Dorsolateral prefrontal cortex (tissue), 120 donors: ENCODE measurements at regions of chr16 and their contacts with region 1.

Region 1: GRCh38 chr16:106623-107324 is 28.7 kb downstream of the MPG start:
- DNase-seq: peak in 7 of 10 donors; percentile 50 to 78 (median 65)
- H3K4me3 ChIP-seq: peak overlapping the region in 2 of 59 donors; percentile 5 to 17
- H3K27ac ChIP-seq: peak overlapping the region in 50 of 59 donors; percentile 13 to 88 (median 67)
- H3K27me3 ChIP-seq: no peaks in the 10 kb centered on the region
- CTCF ChIP-seq: peak; percentile 71 to 96 (median 84)

Region 2: GRCh38 chr16:143456-143855 is 36.7 kb after region 1 on chr16:
- intact Hi-C with region 1: loop called in 1 of 2 experiments (anchors 5 kb)
- DNase-seq: no peak
- H3K4me3 ChIP-seq: no peak overlapping the region
- H3K27ac ChIP-seq: no peak overlapping the region
- H3K27me3 ChIP-seq: no peaks in the 10 kb centered on the region
- CTCF ChIP-seq: no peak

Region 3: GRCh38 chr16:165539-166374 is 59.0 kb after region 1 on chr16 and contains the start of gene HBM:
- intact Hi-C with region 1: no loop called
- DNase-seq: no peak
- H3K4me3 ChIP-seq: peak within 1 kb of the TSS in 50 of 59 donors; percentile 4 to 56 (median 28)
- H3K27ac ChIP-seq: no peak within 1 kb of the TSS
- H3K27me3 ChIP-seq: peaks cover 0 to 57% (median 50%) of the 10 kb centered on the region in 45 donors
- CTCF ChIP-seq: no peak
- total RNA-seq, gene HBM: 1.1 to 2.5 (median 1.4) TPM in 15 of 120 experiments, not detected in the others

Region 4: DNA sequence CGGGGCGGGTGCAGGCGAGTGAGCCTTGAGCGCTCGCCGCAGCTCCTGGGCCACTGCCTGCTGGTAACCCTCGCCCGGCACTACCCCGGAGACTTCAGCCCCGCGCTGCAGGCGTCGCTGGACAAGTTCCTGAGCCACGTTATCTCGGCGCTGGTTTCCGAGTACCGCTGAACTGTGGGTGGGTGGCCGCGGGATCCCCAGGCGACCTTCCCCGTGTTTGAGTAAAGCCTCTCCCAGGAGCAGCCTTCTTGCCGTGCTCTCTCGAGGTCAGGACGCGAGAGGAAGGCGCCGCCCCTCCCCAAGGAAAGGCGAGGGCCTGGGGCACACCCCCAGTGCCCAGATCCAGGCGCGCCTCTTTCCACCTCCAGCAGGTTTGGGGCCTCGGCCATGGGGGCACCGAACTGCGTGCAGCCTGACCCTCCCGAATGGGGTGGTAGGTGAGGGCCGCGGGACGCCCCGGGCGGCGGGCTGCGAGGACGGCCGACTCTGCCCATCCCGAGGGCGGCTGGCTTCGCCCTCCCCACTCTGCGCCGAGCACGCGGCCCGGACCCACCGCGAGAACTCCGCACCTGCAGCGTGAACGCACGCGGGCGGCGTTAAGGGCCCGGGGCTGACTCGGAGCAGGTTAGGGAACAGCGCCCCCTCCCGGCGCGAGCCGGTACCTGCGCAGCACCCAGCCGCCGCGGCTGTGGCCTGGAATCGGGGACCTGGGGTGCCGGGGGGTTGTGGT is 74.3 kb after region 1 on chr16:
- intact Hi-C with region 1: loop called in 1 of 2 experiments (anchors 2 kb)
- DNase-seq: peak; percentile 53 to 79 (median 65)
- H3K4me3 ChIP-seq: peak overlapping the region; percentile 25 to 65 (median 47)
- H3K27ac ChIP-seq: peak overlapping the region in 1 of 59 donors; percentile 26
- H3K27me3 ChIP-seq: peaks cover 0 to 38% (median 25%) of the 10 kb centered on the region in 45 donors
- CTCF ChIP-seq: peak; percentile 81 to 98 (median 94)

Region 5: GRCh38 chr16:361872-362701 is 255.3 kb after region 1 on chr16:
- intact Hi-C with region 1: loop called in 1 of 2 experiments (anchors 5 kb)
- DNase-seq: peak; percentile 45 to 88 (median 77)
- H3K4me3 ChIP-seq: peak overlapping the region in 25 of 59 donors; percentile 4 to 61 (median 51)
- H3K27ac ChIP-seq: peak overlapping the region in 29 of 59 donors; percentile 11 to 74 (median 53)
- H3K27me3 ChIP-seq: peaks cover 0 to 5% (median 0%) of the 10 kb centered on the region in 45 donors
- CTCF ChIP-seq: peak; percentile 25 to 79 (median 70)